Dendritic cell treated with granulocyte-macrophage colony-stimulating factor and Interleukin-4, amounts not matched to agents 40 ng/mL and 50 ng/mL, for 4 days (primary cell): ENCODE measurements at regions of chr10 and their contacts with region 1.

Region 1: GRCh38 chr10:110304780-110305421 is at the start of gene SMNDC1:
- H3K4me3 Mint-ChIP-seq: peak within 1 kb of the TSS; percentile 80
- H3K27ac Mint-ChIP-seq: peak within 1 kb of the TSS; percentile 81
- H3K4me1 Mint-ChIP-seq: peaks cover 32% of the 10 kb centered on the region
- H3K27me3 Mint-ChIP-seq: no peaks in the 10 kb centered on the region

Region 2: DNA sequence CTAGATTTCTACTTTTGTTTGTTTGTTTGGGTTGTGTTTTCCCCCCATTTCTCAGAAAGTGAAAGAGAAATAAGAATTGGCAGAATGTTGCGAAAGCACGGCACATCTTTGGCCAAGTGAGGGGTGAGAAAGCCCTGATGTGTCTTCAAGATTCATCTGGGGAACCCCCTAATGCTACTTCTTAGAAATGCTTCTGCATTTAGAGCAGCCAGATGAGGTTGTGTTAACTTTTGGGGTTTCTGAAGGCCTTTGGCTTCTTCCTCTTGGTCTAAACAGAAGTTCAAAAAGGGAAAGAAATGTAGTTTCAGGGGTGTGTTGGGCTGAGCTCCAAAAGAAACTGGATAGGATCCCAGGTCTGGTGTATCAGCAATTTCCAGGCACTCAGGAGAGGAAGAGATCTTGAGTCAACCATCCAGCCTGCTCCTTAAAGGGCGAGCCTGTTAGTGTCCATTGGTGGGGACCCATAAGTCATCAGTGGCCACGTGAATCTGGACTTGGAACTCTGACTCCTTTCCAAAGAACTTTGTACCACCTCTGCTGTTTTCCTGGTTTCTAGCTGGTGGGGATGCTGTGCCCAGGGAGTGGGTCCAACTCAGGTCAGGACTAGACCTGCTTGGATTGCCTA is 199.3 kb after region 1 on chr10:
- intact Hi-C with region 1: loop called (anchors 2 kb)
- H3K4me3 Mint-ChIP-seq: peak overlapping the region; percentile 62
- H3K27ac Mint-ChIP-seq: peak overlapping the region; percentile 90
- H3K4me1 Mint-ChIP-seq: peaks cover 97% of the 10 kb centered on the region
- H3K27me3 Mint-ChIP-seq: peaks cover 7% of the 10 kb centered on the region

Region 3: DNA sequence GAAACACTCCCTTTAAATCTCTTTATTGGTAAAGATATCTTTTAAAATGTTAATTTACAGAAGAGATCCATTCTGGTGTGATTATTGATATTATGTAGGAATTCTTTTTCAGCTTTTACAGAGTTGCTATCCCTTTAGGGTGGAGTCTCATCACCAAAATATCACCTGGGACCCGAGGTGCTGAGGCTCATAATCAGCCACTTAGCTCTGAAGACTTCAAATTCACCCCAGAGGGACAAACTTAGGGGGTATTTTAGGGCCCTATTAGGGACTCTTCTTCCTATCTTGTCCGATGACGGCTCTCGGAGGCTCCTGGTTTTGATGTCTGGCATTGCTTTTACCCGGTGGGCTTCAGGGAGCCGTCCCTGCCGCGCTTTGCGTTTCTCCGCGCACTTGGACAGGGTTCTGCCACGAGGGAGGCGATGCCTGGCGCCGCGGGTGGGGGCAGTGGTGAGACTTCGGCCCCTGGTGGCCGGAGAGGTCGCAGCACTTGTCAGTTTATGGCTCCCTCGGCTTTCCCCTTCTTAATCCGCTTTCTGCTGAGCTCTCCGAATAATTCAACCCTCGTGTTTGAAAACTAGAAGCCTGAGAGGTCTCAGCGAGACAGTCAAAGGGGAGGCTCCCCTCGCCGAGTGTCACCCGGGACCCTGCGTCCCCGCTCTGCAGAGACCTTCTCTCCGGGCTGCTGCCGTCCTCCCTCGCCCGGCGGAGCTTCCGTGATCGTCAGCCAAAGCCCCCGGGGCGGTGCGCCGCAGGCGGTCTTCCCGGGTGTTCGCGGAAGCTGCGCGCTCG is 367.1 kb after region 1 on chr10:
- intact Hi-C with region 1: loop called (anchors 10 kb)
- H3K4me3 Mint-ChIP-seq: peak overlapping the region; percentile 99
- H3K27ac Mint-ChIP-seq: peak overlapping the region; percentile 96
- H3K4me1 Mint-ChIP-seq: peaks cover 5% of the 10 kb centered on the region
- H3K27me3 Mint-ChIP-seq: peaks cover 13% of the 10 kb centered on the region